Activated CD4-positive, alpha-beta T cell treated with anti-CD3 and anti-CD28 coated beads for 36 hours (primary cell): ENCODE measurements at regions of chr12 and their contacts with region 1.

Region 1: GRCh38 chr12:124767066-124767821 is 96.4 kb downstream of the SCARB1 start:
- DNase-seq: peak; percentile 91
- ATAC-seq: peak; percentile 76
- H3K4me3 Mint-ChIP-seq: no peak overlapping the region
- H3K27ac Mint-ChIP-seq: no peak overlapping the region
- H3K4me1 Mint-ChIP-seq: peaks cover 20% of the 10 kb centered on the region
- H3K27me3 Mint-ChIP-seq: peaks cover 6% of the 10 kb centered on the region

Region 2: DNA sequence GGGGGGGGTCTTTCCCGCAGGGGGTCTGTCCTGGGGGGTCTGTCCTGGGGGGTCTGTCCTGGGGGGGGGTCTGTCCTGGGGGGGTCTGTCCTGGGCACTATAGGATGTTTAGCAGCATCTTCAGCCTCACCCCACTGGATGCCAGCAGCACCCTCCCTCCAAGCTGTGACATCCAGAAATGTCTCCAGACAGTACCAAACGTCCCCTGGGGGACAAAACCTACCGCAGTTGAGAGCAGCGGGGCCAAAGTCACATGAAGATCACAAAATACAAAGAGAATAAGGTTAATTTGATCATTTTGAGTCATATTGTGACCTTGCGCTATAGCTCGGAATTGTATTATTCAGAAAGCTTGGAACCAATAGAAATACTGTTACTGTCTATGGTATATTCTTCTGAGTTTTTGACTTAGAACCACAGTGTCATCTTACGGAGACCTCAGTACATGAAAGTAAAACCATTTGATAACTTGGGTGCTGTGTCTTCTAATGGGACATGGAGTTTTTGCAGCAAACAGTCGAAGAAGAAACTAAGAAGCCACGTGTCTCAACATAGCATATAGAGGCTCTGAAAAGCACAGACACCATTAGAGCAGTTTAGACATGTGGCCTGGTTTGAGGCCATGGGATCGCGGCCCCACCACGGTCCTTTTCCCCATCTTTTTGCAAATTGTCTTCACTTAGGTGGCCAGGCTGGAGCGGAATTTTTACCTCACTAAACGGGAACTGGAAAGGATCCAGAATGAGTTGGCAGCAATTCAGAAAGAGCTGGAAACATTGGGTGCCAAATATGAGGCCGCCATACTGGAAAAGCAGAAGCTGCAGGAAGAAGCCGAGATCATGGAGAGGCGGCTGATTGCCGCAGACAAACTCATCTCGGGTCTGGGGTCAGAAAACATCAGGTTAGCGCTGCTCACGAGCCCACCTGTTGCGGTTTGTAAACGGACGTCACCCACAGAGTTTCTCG is 854.5 kb before region 1 on chr12:
- CTCF ChIA-PET with region 1: no interaction called
- POLR2A ChIA-PET with region 1: no interaction called
- intact Hi-C with region 1: loop called in 1 of 2 experiments (anchors 10 kb)
- DNase-seq: no peak
- ATAC-seq: no peak
- H3K4me3 Mint-ChIP-seq: no peak overlapping the region
- H3K27ac Mint-ChIP-seq: no peak overlapping the region
- H3K4me1 Mint-ChIP-seq: peaks cover 17% of the 10 kb centered on the region
- H3K27me3 Mint-ChIP-seq: no peaks in the 10 kb centered on the region

Region 3: DNA sequence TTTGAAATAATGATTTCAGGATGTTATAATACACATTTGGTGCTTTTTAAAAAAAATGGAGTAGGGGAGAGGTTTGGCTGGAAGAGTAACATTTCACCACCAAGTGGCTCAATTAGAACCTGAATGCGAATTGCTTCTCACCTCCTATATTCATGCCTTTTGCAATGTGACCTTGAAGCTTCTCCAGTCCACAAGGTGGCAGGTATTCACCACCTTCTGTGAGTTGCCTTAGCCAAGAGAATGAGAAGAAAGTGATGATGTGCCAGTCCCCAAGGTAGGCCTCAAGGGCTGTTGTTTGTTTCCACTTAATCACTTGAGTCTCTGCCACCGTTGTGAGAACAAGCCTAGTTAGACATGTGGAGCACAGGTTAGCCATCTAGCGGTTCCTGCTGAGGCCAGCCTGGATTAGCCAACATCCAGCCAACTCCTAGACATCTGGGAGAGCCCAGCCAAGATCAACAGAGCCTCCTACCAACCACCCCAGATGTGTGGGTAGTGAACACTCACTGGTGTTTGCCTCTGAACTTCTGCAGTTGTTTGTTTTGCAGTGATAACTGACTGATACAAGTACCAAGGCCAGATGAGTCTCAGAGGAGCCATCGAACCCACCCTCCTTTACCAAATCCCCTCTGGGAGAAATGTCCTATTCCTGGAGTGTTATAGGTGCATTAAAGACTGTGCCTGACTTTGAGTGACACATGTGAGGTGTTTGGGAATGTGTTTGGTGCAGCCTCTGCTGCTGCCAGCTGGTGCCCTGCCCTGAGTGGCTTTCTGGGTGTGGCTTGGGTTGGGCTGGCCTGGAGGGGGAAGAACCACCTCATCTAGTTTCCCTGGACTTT is 604.9 kb before region 1 on chr12:
- CTCF ChIA-PET with region 1: interaction called, 4 read pairs
- POLR2A ChIA-PET with region 1: interaction called, 4 read pairs
- intact Hi-C with region 1: loop called in 1 of 2 experiments (anchors 2 kb)
- DNase-seq: peak; percentile 26
- ATAC-seq: no peak
- H3K4me3 Mint-ChIP-seq: no peak overlapping the region
- H3K27ac Mint-ChIP-seq: no peak overlapping the region
- H3K4me1 Mint-ChIP-seq: no peaks in the 10 kb centered on the region
- H3K27me3 Mint-ChIP-seq: no peaks in the 10 kb centered on the region

Region 4: DNA sequence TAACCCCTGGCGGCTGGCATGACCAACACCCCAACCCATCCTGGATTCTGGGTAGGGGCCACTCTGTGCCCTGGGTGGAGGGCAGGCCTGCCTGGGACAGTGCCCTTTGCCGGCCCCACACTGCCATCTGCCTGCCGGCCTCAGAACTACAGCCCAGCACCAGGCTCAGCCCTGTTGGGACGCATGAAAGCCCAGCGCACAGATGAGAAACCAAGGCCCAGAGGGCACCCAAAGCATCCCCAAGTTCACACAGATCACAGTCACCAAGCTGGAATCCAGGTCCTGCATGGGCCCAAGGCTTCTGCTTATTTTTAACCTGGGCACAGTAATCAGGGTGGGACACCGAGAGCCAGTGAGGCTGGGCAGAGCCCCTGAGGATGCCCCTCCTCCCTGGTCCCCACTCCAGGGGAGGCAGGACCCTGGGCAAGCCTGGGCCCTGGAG is 446.2 kb before region 1 on chr12:
- CTCF ChIA-PET with region 1: interaction called, 3 read pairs
- POLR2A ChIA-PET with region 1: no interaction called
- intact Hi-C with region 1: loop called (anchors 1 to 5 kb)
- DNase-seq: peak; percentile 82
- ATAC-seq: peak; percentile 92
- H3K4me3 Mint-ChIP-seq: no peak overlapping the region
- H3K27ac Mint-ChIP-seq: no peak overlapping the region
- H3K4me1 Mint-ChIP-seq: no peaks in the 10 kb centered on the region
- H3K27me3 Mint-ChIP-seq: no peaks in the 10 kb centered on the region

Region 5: DNA sequence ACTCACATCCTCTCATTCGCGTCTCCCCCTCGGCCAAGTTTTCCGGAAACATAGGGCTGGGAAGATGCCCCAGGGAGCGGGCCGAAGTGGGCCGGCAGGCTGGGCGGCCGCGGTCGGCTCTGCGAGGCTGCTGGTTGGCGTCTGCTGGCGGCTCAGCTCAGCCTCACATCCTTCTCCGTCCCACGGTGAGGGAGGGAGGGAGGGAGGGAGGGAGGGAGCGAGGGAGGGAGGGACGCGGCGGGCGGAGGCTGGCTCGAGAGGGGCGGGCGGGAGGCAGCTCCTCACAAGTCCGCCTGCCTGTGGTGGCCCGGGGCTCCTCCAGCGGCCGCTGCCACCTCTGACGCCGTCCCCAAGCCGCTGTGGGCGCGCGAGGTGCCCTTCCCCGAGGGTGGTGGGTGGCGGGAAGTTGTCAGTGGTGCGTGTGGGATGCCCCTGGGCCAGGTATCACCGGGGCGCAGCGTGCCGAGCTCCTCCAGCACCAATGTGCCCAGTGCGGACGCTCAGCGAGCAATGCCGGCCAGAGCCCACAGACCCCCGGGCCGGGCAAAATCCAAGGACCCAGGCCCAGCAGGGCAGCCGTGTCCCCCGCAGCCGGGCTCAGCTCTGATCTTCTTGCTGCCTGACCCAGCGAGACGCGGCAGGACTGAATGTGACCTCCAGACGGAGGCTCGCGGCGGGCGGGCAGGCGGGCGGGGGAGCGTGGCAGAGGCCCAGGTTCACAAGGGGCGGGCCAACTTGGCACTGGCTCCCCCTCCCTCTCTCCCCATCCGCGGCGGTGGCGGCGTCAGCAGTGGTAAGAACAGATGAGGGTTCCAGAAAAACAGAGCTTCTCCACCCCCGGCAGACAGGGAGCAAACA is 378.3 kb before region 1 on chr12:
- CTCF ChIA-PET with region 1: interaction called, 7 read pairs
- POLR2A ChIA-PET with region 1: no interaction called
- intact Hi-C with region 1: loop called (anchors 5 kb)
- DNase-seq: peak; percentile 86
- ATAC-seq: peak; percentile 79
- H3K4me3 Mint-ChIP-seq: peak overlapping the region; percentile 44
- H3K27ac Mint-ChIP-seq: no peak overlapping the region
- H3K4me1 Mint-ChIP-seq: peaks cover 43% of the 10 kb centered on the region
- H3K27me3 Mint-ChIP-seq: no peaks in the 10 kb centered on the region

Region 6: DNA sequence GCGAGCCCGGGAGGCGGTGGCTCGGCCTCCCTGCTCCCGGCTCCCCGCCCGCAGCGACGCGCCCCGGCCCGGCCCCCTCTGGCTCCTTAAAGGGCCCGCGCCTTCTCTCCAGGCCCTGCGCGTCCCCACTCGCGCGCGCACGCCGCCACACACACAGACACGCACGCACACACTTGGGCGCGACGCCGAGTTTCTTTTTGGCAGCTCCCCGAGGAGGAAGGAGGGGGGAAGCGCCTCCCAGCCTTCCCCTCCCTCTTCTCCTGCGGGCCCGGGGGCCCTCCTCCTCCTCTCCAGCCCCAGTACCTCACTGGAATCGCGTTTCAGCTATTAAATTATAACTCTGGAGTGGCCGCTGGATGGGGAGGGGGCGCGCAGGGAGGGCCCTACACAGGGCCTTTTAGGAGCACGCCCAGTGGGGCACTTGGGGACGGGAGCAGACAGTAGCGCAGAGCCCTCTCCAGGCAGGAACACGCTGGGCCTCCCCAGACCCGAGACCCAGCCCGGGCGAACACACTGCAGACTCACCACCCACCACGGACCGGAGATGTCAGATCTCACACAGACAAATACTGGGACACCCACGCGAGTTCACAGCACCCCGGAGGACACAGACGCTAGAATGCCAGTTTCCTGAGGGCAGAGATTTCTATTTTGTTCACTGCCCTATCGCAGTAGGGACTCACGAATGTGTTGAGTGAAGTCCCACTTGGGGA is 199.4 kb before region 1 on chr12:
- CTCF ChIA-PET with region 1: no interaction called
- POLR2A ChIA-PET with region 1: no interaction called
- intact Hi-C with region 1: loop called (anchors 1 to 5 kb)
- DNase-seq: peak; percentile 89
- ATAC-seq: peak; percentile 72
- H3K4me3 Mint-ChIP-seq: peak overlapping the region; percentile 75
- H3K27ac Mint-ChIP-seq: peak overlapping the region; percentile 89
- H3K4me1 Mint-ChIP-seq: peaks cover 33% of the 10 kb centered on the region
- H3K27me3 Mint-ChIP-seq: no peaks in the 10 kb centered on the region

Region 7: GRCh38 chr12:124863416-124864325 is 96.4 kb after region 1 on chr12 and contains the start of gene SCARB1:
- CTCF ChIA-PET with region 1: no interaction called
- POLR2A ChIA-PET with region 1: no interaction called
- intact Hi-C with region 1: no loop called
- DNase-seq: peak; percentile 91
- ATAC-seq: peak; percentile 91
- H3K4me3 Mint-ChIP-seq: peak within 1 kb of the TSS; percentile 76
- H3K27ac Mint-ChIP-seq: peak within 1 kb of the TSS; percentile 89
- H3K4me1 Mint-ChIP-seq: peaks cover 21% of the 10 kb centered on the region
- H3K27me3 Mint-ChIP-seq: peaks cover 3% of the 10 kb centered on the region
- total RNA-seq, gene SCARB1: 22.9 to 24.1 TPM